Activated CD4-positive, alpha-beta T cell treated with anti-CD3 and anti-CD28 coated beads, Interleukin-2, amount 10 ng/mL, durations not matched to agents 7 days and 5 days (primary cell): ENCODE measurements at regions of chr19 and their contacts with region 1.

Region 1: DNA sequence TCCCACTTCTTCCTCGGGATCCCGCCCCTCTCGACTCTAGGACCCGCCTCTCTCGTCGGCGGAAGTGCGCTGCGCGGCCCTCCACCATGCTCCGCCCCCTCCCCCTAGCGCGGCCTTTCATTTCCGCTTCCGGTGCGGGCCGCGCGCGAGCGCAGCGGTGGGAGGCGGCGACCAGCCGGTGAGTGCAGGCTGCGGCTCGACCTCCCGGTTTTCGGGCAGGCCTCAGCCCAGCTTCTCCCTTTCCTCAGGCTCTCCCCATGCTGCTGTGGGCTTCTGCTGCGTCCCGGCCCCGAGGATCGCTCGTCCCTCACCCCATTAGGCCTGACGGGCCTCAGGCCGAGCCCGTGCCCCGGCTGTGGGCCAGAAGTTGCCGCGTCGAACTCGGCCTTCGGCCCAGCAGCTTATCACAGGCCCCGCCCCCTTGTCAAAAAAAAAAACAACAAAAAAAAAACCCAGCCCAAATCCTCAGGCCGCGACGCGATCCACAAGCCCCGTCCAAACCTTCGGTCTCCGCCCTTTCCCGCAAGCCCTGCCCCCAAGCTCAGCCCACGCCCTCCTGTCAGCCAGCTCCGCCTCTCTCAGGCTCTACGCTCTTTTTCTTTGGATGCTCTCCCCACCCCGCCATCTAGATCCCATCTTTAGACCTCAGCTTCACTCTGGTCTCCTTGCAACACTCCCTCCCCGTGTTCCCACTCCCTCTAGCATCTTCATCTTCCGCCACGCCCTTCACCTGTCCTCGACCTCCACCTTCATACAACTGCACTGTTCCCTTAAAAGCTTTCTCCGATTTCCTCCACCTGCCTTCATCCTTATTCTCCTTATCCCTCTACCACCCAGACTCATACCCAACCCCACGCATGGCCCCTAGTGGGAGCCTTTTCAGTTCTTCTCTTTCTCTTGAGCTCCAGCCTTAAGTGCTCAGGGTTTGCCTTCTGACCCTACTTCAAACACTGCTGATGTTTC is at the start of gene CLASRP:
- DNase-seq: peak; percentile 90
- H3K4me3 Mint-ChIP-seq: peak within 1 kb of the TSS; percentile 95
- H3K27ac Mint-ChIP-seq: peak within 1 kb of the TSS; percentile 99
- H3K4me1 Mint-ChIP-seq: peaks cover 39% of the 10 kb centered on the region
- H3K27me3 Mint-ChIP-seq: no peaks in the 10 kb centered on the region
- total RNA-seq, gene CLASRP: 101 to 109 TPM

Region 2: GRCh38 chr19:44943801-44944249 is 95.4 kb before region 1 on chr19:
- CTCF ChIA-PET with region 1: no interaction called
- POLR2A ChIA-PET with region 1: no interaction called
- DNase-seq: no peak
- H3K4me3 Mint-ChIP-seq: no peak overlapping the region
- H3K27ac Mint-ChIP-seq: no peak overlapping the region
- H3K4me1 Mint-ChIP-seq: no peaks in the 10 kb centered on the region
- H3K27me3 Mint-ChIP-seq: no peaks in the 10 kb centered on the region

Region 3: GRCh38 chr19:45059278-45059965 is 20.2 kb after region 1 on chr19:
- CTCF ChIA-PET with region 1: interaction called, 19 read pairs
- POLR2A ChIA-PET with region 1: no interaction called
- DNase-seq: peak; percentile 90
- H3K4me3 Mint-ChIP-seq: no peak overlapping the region
- H3K27ac Mint-ChIP-seq: no peak overlapping the region
- H3K4me1 Mint-ChIP-seq: peaks cover 2% of the 10 kb centered on the region
- H3K27me3 Mint-ChIP-seq: no peaks in the 10 kb centered on the region